ENCODE measurements at regions of chr2 and their contacts with region 1.

Region 1: GRCh38 chr2:171893824-171894611 is at the start of gene SLC25A12:
- DNase-seq: peak; percentile 64
- H3K4me3 Mint-ChIP-seq: peak within 1 kb of the TSS; percentile 98
- H3K27ac Mint-ChIP-seq: peak within 1 kb of the TSS; percentile 89
- H3K4me1 Mint-ChIP-seq: peaks cover 35% of the 10 kb centered on the region
- H3K27me3 Mint-ChIP-seq: no peaks in the 10 kb centered on the region
- total RNA-seq, gene SLC25A12: 27.2 and 27.3 TPM in 2 replicates

Region 2: GRCh38 chr2:171878481-171878993 is 15.5 kb before region 1 on chr2:
- intact Hi-C with region 1: loop called (anchors 1 kb)
- DNase-seq: no peak
- H3K4me3 Mint-ChIP-seq: no peak overlapping the region
- H3K27ac Mint-ChIP-seq: peak overlapping the region; percentile 59
- H3K4me1 Mint-ChIP-seq: peaks cover 36% of the 10 kb centered on the region
- H3K27me3 Mint-ChIP-seq: no peaks in the 10 kb centered on the region

Region 3: DNA sequence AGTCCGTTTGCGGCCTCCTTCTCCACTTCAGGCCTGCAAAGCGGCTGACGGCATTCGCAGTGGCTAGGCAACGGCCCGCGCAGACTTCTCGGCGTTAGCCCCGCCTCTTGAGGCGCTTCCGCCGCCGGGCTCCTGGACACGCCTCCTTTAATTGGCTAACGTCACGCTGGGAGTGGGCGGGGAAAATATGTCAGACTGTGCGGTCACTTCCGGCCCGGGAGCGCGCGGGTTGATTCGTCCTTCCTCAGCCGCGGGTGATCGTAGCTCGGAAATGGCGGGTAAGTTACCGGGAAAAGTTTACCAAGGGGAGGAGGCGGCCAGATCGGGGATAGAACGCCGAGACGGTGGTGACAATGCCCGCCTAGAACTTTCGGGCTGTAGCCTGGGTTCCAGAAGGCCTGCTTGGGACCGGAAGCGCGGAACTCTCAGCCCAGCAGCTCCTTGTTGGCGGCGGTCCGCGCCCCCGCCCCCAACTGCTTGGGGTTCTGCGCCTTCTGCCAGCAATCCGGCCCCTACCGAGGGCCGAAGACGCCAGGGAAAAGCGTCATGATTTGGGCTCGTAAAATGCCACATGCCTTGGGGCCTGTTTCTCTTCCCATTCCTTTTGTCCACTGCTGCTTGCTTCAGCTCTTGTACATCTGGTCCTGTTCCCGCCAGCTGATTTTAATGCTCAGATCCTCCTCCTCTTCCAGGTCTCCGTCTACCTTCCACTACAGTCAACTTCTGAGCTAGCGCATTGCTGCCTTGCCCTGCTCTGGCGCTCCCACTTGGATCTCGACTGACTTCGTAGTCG is 28.4 kb after region 1 on chr2 and contains the start of gene HAT1:
- intact Hi-C with region 1: loop called (anchors 1 kb)
- DNase-seq: peak; percentile 97
- H3K4me3 Mint-ChIP-seq: peak within 1 kb of the TSS; percentile 94
- H3K27ac Mint-ChIP-seq: peak within 1 kb of the TSS; percentile 96
- H3K4me1 Mint-ChIP-seq: peaks cover 33% of the 10 kb centered on the region
- H3K27me3 Mint-ChIP-seq: peaks cover 2% of the 10 kb centered on the region
- total RNA-seq, gene HAT1: 67.4 and 70.1 TPM in 2 replicates

Region 4: DNA sequence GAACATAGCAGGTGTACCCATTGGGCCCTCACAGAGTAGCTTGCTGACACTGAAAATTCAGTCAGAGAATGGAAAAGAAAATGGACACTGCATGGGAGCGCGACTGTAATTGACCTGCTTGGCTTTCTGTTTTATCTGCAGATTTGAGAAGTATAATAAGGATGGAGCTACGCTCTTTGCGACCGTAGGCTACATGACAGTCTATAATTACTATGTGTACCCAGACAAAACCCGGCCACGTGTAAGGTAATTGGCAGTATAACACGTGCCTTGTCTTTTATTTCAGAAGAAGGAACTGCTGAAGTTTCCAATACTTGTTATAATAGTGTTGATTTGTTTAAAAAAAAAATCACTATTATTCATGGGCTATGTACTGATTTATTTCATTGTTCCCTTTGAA is 72.2 kb after region 1 on chr2:
- intact Hi-C with region 1: no loop called
- DNase-seq: no peak
- H3K4me3 Mint-ChIP-seq: no peak overlapping the region
- H3K27ac Mint-ChIP-seq: no peak overlapping the region
- H3K4me1 Mint-ChIP-seq: peaks cover 23% of the 10 kb centered on the region
- H3K27me3 Mint-ChIP-seq: no peaks in the 10 kb centered on the region

Region 5: DNA sequence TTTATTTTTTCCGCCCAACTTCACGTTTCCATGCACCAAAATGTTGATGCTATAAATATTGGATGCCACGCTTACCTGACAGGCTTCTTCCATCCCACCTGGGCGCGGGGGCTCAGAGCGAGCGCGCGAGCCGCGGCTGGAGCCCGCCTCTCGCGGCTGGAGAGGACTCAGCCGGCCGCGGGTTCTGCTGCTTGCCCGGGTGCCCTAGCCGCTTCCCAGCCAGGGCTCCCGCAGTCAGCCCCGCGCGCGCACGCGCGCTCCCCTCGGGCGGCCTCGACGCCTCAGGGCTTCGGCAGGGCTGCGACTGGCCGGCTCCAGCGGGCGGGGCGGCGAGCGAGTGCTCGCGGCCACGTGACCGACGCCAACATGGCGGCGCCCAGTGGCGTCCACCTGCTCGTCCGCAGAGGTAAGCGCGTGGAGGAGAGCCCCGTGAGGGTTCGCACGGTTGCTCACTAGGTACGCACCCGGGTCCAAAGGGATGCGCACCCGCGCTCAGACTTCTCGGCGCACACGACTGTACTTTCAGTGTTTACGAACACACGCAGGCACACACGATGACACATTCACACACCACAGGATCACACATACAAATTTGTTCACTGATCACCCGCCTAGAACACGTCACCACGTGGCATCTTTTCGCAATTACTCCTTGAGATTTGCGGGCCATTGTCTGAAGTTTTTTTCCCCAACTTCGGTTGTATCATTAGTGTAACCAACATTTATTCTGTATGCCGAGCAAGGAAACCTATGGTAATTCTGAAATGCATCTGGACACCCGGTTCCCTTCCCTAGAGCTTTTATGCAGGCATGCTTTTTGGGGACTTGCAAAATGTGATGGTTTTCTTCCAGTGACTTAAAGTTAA is 105.8 kb after region 1 on chr2 and contains the start of gene METAP1D:
- intact Hi-C with region 1: loop called (anchors 5 kb)
- DNase-seq: peak; percentile 86
- H3K4me3 Mint-ChIP-seq: peak within 1 kb of the TSS; percentile 92
- H3K27ac Mint-ChIP-seq: peak within 1 kb of the TSS; percentile 96
- H3K4me1 Mint-ChIP-seq: peaks cover 18% of the 10 kb centered on the region
- H3K27me3 Mint-ChIP-seq: peaks cover 3% of the 10 kb centered on the region
- total RNA-seq, gene METAP1D: 6.0 and 7.9 TPM in 2 replicates

Region 6: GRCh38 chr2:172293956-172294355 is 399.9 kb after region 1 on chr2:
- intact Hi-C with region 1: no loop called
- DNase-seq: no peak
- H3K4me3 Mint-ChIP-seq: no peak overlapping the region
- H3K27ac Mint-ChIP-seq: no peak overlapping the region
- H3K4me1 Mint-ChIP-seq: no peaks in the 10 kb centered on the region
- H3K27me3 Mint-ChIP-seq: peaks cover 13% of the 10 kb centered on the region

Region 7: DNA sequence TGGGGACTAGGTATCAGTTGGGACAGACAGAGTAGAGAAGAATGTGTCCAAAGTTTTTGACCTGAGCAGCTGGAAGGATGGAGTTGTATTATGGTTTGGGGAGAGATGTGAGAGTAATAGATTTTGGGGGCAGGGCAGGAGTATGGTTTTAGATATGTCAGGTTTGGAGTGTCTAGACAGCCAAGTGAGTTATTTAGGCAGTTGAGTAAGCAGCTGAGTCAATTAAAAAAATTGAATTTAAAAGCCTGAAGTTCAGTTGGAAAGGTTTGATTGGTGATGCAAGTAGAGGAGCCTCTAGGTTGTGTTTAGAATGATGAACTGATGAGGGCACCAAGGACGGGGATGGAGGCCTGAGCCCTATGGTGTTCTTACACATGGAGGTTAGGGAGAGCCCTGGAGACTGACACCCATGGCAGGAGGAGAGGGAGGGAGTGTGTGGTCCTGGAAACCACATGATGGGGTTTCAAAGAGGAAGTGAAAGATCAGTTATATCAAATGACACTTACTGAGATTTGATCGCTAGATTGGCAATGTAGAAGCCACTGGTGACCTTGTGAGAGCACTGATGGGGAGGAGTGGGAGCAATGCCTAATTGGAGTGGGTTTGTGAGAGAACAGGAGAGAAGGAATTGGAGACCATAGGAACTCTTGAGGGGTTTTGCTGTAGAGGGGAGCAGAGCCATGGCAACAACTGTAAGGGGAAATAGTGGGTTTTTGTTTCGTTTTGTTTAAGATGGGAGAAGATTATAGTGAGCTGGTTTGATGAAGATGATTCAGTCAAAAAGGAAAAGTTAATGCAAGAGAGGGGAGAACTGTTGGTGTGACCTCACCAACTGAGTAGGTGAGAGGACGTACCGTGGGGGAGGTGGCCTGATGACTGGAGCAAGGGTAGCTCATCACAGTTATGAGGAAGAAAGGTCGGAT is 543.7 kb after region 1 on chr2:
- intact Hi-C with region 1: loop called (anchors 10 kb)
- DNase-seq: peak; percentile 27
- H3K4me3 Mint-ChIP-seq: no peak overlapping the region
- H3K27ac Mint-ChIP-seq: no peak overlapping the region
- H3K4me1 Mint-ChIP-seq: peaks cover 42% of the 10 kb centered on the region
- H3K27me3 Mint-ChIP-seq: peaks cover 43% of the 10 kb centered on the region

Region 8: DNA sequence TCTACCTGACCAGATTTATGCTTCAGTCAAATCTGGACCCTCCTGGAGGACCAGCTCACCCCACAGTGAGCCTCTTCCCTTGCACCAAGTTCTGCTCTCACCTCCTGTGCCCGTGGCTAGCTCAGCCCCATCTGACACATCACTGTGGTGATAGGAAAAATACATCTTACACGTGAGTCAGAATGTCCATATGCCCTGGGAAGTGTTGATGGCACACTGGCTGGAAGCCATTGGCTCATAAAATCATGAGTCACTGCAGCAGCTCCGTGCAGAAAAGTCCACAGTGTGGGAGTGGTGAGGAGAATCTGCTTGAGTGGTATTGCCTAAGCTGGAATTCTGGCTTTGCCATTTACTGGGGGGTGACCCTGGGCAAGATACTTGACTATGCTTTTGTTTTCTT is 799.0 kb after region 1 on chr2:
- intact Hi-C with region 1: loop called (anchors 5 kb)
- DNase-seq: no peak
- H3K4me3 Mint-ChIP-seq: no peak overlapping the region
- H3K27ac Mint-ChIP-seq: peak overlapping the region; percentile 14
- H3K4me1 Mint-ChIP-seq: peaks cover 35% of the 10 kb centered on the region
- H3K27me3 Mint-ChIP-seq: peaks cover 8% of the 10 kb centered on the region